ENCODE measurements at regions of chr1 and their contacts with region 1.

Region 1: GRCh38 chr1:100834777-100835660 is 59.6 kb downstream of the EXTL2 start:
- DNase-seq: no peak
- H3K4me3 ChIP-seq: no peak overlapping the region
- H3K27ac ChIP-seq: no peak overlapping the region
- H3K4me1 ChIP-seq: no peaks in the 10 kb centered on the region
- H3K27me3 ChIP-seq: no peaks in the 10 kb centered on the region
- CTCF ChIP-seq: no peak
- POLR2A ChIP-seq: no peak

Region 2: DNA sequence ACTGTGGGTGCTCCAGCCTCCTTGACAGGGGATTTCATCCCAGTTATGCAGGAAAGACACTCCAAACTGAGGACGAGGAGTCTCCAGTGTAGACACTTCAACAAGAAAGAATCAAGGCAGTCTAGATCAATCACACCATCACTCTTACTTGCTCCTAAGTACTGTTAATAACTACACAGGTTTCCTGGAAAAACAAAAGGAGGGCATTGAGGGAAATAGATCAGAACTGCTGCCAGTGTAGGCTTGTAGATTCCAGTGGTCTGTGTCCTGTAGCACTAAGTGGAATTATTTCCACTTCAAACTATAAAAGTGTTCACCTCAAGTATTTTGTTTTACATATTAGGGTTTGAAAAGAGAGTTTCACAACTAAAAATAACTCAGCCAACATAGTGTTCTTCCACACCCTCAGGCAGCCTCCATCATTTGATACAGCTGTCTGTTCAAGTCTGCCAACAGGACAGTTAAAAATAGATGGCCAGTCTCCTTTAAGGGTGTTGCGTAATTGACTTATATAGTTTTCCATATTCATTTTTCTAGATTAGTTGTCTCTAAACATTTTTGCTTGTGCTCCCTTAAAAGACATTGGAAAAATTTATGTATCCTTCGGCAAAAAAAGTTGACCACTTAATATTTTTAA is 1016.8 kb before region 1 on chr1:
- intact Hi-C with region 1: no loop called
- DNase-seq: no peak
- H3K4me3 ChIP-seq: no peak overlapping the region
- H3K27ac ChIP-seq: no peak overlapping the region
- H3K4me1 ChIP-seq: no peaks in the 10 kb centered on the region
- H3K27me3 ChIP-seq: no peaks in the 10 kb centered on the region
- CTCF ChIP-seq: no peak
- POLR2A ChIP-seq: no peak

Region 3: DNA sequence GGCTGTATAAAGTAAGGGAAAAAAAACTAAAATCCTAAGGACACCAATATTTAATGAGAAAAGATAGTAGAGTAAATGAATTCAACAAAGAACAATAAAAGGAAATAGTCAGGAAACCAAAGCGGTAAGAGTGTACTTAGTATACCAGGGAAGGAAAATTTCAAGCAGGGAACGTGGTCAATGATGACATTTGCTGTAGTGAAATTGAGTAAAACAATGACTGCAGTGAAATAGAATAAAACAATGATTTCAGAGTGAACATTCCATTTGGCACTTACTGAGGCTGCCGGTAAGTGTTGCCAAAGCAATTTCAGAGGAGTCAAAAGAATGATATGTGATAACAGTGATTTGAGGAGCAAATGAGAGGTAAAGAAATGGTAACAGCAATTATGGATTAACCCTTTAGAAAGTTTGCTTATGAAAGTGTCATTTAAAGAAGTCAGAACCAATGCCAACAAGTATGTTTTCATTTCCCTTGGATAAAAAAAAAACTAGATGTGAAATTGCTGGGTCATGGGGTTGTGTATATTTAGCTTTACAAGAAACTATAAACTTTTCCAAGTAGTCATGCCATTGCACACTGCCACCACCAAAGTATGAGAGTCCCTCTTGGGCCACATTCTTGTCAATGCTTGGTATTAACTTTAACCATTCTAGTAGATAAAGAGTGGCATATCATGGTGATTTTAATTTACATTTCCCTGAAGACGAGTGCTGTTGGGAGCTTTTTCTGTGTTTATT is 64.9 kb before region 1 on chr1:
- intact Hi-C with region 1: loop called (anchors 5 kb)
- DNase-seq: no peak
- H3K4me3 ChIP-seq: no peak overlapping the region
- H3K27ac ChIP-seq: no peak overlapping the region
- H3K4me1 ChIP-seq: no peaks in the 10 kb centered on the region
- H3K27me3 ChIP-seq: no peaks in the 10 kb centered on the region
- CTCF ChIP-seq: no peak
- POLR2A ChIP-seq: no peak